Transverse colon (tissue), 4 donors: ENCODE measurements at regions of chr11 and their contacts with region 1.

Region 1: GRCh38 chr11:57800444-57801182 is 39.0 kb downstream of the CTNND1 start:
- DNase-seq: no peak
- H3K4me3 ChIP-seq: no peak overlapping the region
- H3K27ac ChIP-seq: peak overlapping the region; percentile 81 to 88 (median 86)
- H3K4me1 ChIP-seq: peaks cover 28 to 50% (median 36%) of the 10 kb centered on the region in 4 donors
- H3K27me3 ChIP-seq: no peaks in the 10 kb centered on the region
- CTCF ChIP-seq: peak; percentile 89 to 99 (median 91)
- EP300 ChIP-seq: no peak
- POLR2A ChIP-seq: no peak

Region 2: DNA sequence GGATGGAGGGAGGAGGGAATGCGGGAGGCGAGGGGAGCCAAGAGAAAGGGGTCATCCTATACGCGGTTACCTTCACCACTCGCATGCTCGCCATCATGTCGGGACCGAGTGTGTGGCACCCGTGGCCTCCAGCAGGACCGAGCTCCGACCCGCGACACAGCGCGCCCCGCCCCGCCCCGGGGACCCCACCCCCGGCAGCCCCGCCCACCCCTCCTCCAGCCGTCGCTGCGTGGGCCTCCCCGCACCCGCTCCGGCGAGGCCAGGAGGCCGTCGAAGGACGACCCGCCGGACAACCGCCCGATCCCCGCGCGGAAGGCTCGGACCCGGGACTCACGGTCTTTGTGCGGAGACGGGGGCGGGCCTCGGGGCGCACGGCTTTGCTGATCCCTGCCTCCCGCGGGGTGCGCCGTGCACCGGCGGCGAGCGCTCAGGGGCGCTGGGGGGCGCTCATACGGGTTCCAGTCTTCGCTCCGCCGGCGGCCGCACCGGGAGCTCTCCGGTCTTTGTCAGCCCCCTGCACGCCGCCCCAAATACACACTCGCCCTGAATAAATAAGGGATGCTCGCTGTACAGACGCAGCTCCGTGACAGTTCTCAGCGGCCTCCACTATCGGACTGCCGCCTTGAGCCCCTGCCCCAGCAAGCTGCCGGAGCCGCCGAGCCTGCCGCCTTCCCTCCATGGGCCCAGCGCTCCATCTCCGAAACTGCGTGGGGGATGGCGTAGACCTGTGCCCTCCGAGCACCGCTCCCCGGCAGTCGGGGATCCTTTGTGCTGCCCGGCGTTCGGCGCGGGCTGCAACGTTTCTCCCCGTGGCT is 232.9 kb before region 1 on chr11 and contains the start of gene UBE2L6:
- in situ Hi-C with region 1: loop called in 1 of 4 experiments (anchors 25 kb)
- intact Hi-C with region 1: no loop called
- DNase-seq: peak; percentile 87
- H3K4me3 ChIP-seq: peak within 1 kb of the TSS; percentile 70 to 81 (median 76)
- H3K27ac ChIP-seq: peak within 1 kb of the TSS; percentile 82 to 90 (median 88)
- H3K4me1 ChIP-seq: peaks cover 10 to 27% (median 16%) of the 10 kb centered on the region in 4 donors
- H3K27me3 ChIP-seq: no peaks in the 10 kb centered on the region
- CTCF ChIP-seq: no peak
- EP300 ChIP-seq: no peak
- POLR2A ChIP-seq: no peak
- total RNA-seq, gene UBE2L6: 15.3 to 24.3 (median 20.6) TPM

Region 3: DNA sequence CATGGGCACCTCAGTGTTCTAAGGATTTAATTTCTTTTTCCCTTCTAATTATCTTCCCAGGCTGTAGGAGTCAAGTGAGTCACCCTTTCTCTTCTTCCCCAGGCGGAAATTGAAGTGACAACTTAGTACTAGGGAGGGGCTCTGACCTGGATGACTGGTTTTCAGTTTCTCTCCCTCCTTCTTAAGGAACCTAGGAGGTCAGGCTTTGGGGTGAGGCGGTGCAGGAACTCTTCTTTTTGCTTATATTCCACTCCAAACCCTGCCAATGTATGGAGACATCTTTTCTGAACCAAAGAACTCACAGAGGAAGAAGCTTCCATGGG is 120.1 kb before region 1 on chr11:
- in situ Hi-C with region 1: loop called in 1 of 4 experiments (anchors 25 kb)
- intact Hi-C with region 1: no loop called
- DNase-seq: no peak
- H3K4me3 ChIP-seq: no peak overlapping the region
- H3K27ac ChIP-seq: peak overlapping the region in 1 of 4 donors; percentile 16
- H3K4me1 ChIP-seq: peaks cover 0 to 30% (median 0%) of the 10 kb centered on the region in 4 donors
- H3K27me3 ChIP-seq: no peaks in the 10 kb centered on the region
- CTCF ChIP-seq: no peak
- EP300 ChIP-seq: no peak
- POLR2A ChIP-seq: no peak

Region 4: GRCh38 chr11:57741132-57742086 is 59.2 kb before region 1 on chr11 and contains the start of gene SELENOH:
- in situ Hi-C with region 1: loop called in 2 of 4 experiments (anchors 10 kb)
- intact Hi-C with region 1: loop called (anchors 10 kb)
- DNase-seq: peak; percentile 97
- H3K4me3 ChIP-seq: peak within 1 kb of the TSS; percentile 78 to 94 (median 94)
- H3K27ac ChIP-seq: peak within 1 kb of the TSS; percentile 94 to 99 (median 97)
- H3K4me1 ChIP-seq: peaks cover 7 to 25% (median 11%) of the 10 kb centered on the region in 4 donors
- H3K27me3 ChIP-seq: no peaks in the 10 kb centered on the region
- CTCF ChIP-seq: peak in 1 of 5 experiments; percentile 6
- EP300 ChIP-seq: no peak
- POLR2A ChIP-seq: peak; percentile 93
- total RNA-seq, gene SELENOH: 78.2 to 117 (median 102) TPM

Region 5: DNA sequence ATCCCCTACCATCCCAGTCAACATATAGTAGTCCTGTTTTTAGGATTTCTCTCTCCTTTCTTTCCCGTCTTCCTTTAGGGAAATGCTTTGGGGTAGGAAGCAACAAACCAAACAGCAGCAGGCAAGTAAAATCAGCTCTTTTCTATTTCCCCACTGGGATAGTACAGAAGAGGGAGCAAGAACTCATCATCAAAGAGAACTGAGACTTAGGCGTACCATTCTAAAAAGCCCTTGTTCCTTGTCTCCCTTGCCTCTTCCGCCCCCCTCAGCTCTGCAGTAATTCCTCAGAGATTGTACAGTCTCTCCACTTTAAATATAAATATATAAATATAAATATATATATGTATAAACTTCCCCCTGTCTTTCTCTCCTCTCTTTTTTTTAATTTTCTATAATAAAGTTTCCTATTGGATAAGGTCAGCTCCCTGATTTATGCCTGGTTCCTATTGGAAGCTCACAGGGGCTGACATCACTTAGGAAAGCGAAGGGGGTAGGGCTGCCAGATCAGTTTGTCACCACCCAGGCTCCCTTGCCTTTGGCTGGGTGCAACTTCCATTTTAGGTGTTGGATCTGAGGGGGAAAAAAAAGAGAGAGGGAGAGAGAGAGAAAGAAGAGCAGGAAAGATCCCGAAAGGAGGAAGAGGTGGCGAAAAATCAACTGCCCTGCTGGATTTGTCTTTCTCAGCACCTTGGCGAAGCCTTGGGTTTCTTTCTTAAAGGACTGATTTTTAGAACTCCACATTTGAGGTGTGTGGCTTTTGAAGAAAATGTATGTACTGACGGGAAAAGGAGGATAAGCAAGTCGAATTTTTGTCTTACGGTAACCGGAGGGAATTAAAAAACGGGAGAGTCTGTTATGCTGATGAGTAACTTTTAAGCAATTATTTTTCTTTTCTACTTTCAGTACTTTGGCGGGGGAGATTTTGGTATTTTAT is 39.0 kb before region 1 on chr11 and contains the start of gene CTNND1:
- in situ Hi-C with region 1: loop called in 1 of 4 experiments (anchors 5 kb)
- intact Hi-C with region 1: loop called (anchors 5 kb)
- DNase-seq: peak; percentile 91
- H3K4me3 ChIP-seq: peak within 1 kb of the TSS; percentile 46 to 80 (median 60)
- H3K27ac ChIP-seq: peak within 1 kb of the TSS; percentile 89 to 99 (median 96)
- H3K4me1 ChIP-seq: peaks cover 0 to 38% (median 24%) of the 10 kb centered on the region in 4 donors
- H3K27me3 ChIP-seq: no peaks in the 10 kb centered on the region
- CTCF ChIP-seq: peak in 1 of 5 experiments; percentile 2
- EP300 ChIP-seq: no peak
- POLR2A ChIP-seq: peak; percentile 98
- total RNA-seq, gene CTNND1: 165 to 415 (median 374) TPM

Region 6: GRCh38 chr11:57873196-57873911 is 72.7 kb after region 1 on chr11:
- in situ Hi-C with region 1: no loop called
- intact Hi-C with region 1: no loop called
- DNase-seq: no peak
- H3K4me3 ChIP-seq: no peak overlapping the region
- H3K27ac ChIP-seq: no peak overlapping the region
- H3K4me1 ChIP-seq: no peaks in the 10 kb centered on the region
- H3K27me3 ChIP-seq: no peaks in the 10 kb centered on the region
- CTCF ChIP-seq: no peak
- EP300 ChIP-seq: no peak
- POLR2A ChIP-seq: no peak

Region 7: DNA sequence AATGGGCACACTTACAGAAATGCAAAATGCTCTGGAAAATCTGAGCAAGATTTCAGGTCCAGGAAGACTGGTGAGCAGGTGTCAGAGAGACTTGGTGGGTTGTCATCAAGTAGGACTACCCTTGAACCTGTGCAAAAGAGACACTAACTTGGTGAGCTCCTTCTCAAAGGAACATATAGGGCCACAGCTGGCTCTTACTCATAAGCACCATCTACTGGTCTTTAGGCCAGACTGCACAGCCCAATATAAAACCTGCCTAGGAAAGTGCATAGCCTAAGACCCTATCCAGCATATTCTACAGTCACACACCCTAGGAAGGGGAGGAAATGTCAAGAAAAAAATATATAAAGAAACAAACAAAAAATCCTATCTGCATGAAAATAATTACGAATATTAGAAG is 485.6 kb after region 1 on chr11:
- in situ Hi-C with region 1: loop called in 1 of 4 experiments (anchors 25 kb)
- intact Hi-C with region 1: no loop called
- DNase-seq: peak; percentile 26
- H3K4me3 ChIP-seq: no peak overlapping the region
- H3K27ac ChIP-seq: no peak overlapping the region
- H3K4me1 ChIP-seq: peaks cover 0 to 9% (median 0%) of the 10 kb centered on the region in 4 donors
- H3K27me3 ChIP-seq: no peaks in the 10 kb centered on the region
- CTCF ChIP-seq: peak; percentile 45 to 73 (median 65)
- EP300 ChIP-seq: no peak
- POLR2A ChIP-seq: no peak

Region 8: DNA sequence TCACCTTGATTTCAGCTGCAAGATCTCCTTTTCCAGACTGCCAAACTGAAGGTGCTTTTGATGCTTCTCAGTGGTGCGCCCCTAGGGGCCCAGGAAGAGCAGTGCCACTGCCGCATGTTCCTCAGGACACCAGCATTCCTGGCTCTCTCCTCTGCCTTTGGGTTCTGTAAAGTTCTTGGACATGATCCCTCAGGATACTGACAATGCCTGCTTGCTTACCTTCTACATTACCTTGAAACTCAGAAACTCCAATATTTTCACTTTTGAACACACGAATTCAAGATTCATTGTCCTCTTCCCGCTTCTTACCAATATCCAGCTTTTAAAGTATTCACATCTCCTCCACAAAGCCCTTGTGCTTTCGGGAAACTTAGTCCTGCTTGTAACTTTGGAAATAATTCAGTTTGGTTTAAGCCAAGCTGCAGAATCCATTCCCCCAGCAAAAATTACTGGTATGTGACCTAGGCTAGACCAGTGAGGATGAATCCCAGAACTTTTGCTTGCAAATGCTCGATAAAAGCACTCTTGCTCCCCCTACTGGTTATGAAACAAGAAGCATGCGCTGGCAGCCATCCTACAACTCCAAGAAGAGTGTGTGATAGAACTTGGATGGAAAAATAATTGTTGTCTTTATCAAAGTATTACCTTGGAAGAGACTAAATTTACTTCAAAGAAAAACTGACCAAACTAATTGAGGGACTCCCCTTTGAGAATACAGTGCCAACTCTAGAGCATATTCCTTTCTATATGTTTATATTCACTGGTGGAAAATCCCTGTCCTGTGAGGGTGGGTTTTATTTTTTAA is 723.8 kb after region 1 on chr11:
- in situ Hi-C with region 1: loop called in 2 of 4 experiments (anchors 25 kb)
- intact Hi-C with region 1: no loop called
- DNase-seq: peak; percentile 61
- H3K4me3 ChIP-seq: no peak overlapping the region
- H3K27ac ChIP-seq: peak overlapping the region; percentile 3 to 33 (median 8)
- H3K4me1 ChIP-seq: peaks cover 0 to 23% (median 8%) of the 10 kb centered on the region in 4 donors
- H3K27me3 ChIP-seq: no peaks in the 10 kb centered on the region
- CTCF ChIP-seq: peak; percentile 64 to 69 (median 66)
- EP300 ChIP-seq: no peak
- POLR2A ChIP-seq: no peak